ENCODE measurements at regions of chr10 and their contacts with region 1.

Region 1: DNA sequence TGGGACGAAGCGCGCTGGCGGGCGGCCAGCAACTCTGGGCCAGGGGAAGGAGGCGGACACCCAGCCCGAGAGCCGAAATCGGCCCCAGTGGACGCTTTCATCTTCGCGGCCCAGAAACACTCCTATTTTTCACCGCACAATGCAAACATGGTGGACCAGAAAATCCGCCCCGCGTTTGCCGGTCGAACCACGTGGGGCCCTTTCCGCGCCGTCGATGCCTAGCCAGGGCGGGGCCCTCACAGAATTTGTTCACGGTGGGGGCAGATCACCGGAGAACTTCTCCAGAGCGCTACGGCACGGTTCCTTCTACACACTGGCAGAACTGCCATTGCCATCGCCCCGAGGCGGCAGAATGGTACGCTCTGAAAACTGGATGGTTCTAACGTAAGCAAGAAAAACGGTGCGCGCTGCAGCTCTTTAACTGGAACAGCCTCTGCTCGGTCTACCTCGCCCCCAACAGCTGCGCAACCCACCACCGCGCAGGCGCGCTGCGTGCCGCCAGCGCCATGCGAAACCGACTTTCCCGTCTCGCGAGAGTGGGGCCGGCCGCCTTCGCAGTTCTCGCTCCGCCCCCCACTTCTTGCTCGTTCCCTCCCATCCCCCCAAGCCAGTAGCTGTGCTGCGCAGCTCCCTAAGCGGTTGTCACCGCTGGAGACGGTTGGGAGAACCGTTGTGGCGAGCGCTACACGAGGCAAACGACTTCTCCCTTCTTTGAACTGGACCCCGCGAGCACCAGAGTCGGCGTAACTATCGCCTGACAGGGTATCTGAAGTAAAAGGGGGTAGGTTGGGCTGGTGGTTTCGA is at the start of gene HNRNPH3:
- DNase-seq: peak; percentile 97 to 99 (median 99)
- ATAC-seq: peak; percentile 86
- H3K4me3 ChIP-seq: peak within 1 kb of the TSS; percentile 92
- H3K4me3 Mint-ChIP-seq: peak within 1 kb of the TSS; percentile 94 to 100 (median 100)
- H3K27ac ChIP-seq: peak within 1 kb of the TSS; percentile 99
- H3K27ac Mint-ChIP-seq: peak within 1 kb of the TSS; percentile 98 to 100 (median 100)
- H3K4me1 ChIP-seq: peaks cover 15 to 21% of the 10 kb centered on the region in 2 donors
- H3K4me1 Mint-ChIP-seq: peaks cover 40 to 65% (median 53%) of the 10 kb centered on the region in 7 donors
- H3K27me3 ChIP-seq: no peaks in the 10 kb centered on the region
- H3K27me3 Mint-ChIP-seq: peaks cover 0 to 4% (median 0%) of the 10 kb centered on the region in 5 donors
- total RNA-seq, gene HNRNPH3: 125 to 190 (median 156) TPM

Region 2: DNA sequence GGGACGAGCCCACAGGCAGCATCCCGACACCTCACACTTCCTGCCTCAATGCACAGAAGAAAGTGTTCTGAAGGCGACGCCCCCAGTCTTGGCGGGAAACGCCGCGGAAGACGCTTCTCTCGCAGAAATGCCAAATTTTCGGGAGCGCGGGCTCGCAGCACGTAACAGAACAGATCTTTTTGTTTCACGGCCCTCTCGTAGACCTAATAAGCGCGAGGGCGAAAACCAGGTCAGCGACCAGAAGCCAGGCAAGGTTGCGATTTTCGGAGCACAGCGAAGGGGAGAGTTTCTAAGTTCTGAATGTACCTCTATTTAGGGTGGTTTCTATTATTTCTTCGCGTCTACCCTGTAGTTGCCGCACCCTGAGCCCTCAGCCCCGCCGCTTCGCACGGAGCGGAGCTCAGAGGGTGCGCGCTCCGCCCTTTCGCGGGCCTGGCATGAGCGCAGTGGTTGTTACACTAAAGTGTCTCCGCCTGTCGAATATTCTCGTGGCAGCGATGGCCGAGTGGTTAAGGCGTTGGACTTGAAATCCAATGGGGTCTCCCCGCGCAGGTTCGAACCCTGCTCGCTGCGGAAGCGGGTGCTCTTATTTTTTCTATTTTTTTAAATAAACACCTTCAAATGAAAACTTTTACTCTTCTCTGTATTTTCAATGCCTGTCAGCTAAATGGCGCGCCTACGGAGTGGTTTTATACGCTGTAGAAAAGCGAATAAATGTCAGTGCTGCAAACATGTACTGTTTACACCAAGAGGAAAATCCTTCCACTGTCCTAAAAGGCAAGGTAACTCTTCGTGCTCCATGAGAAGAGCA is 567.4 kb before region 1 on chr10:
- CTCF ChIA-PET with region 1: no interaction called
- POLR2A ChIA-PET with region 1: interaction called, 15 read pairs
- intact Hi-C with region 1: loop called in 1 of 2 experiments (anchors 1 kb)
- DNase-seq: peak; percentile 96 to 99 (median 98)
- ATAC-seq: peak; percentile 88
- H3K4me3 ChIP-seq: peak overlapping the region; percentile 99
- H3K4me3 Mint-ChIP-seq: peak overlapping the region; percentile 81 to 99 (median 94)
- H3K27ac ChIP-seq: peak overlapping the region; percentile 81
- H3K27ac Mint-ChIP-seq: peak overlapping the region; percentile 95 to 100 (median 100)
- H3K4me1 ChIP-seq: peaks cover 4 to 6% of the 10 kb centered on the region in 2 donors
- H3K4me1 Mint-ChIP-seq: peaks cover 0 to 37% (median 14%) of the 10 kb centered on the region in 7 donors
- H3K27me3 ChIP-seq: no peaks in the 10 kb centered on the region
- H3K27me3 Mint-ChIP-seq: peaks cover 0 to 16% (median 0%) of the 10 kb centered on the region in 5 donors

Region 3: DNA sequence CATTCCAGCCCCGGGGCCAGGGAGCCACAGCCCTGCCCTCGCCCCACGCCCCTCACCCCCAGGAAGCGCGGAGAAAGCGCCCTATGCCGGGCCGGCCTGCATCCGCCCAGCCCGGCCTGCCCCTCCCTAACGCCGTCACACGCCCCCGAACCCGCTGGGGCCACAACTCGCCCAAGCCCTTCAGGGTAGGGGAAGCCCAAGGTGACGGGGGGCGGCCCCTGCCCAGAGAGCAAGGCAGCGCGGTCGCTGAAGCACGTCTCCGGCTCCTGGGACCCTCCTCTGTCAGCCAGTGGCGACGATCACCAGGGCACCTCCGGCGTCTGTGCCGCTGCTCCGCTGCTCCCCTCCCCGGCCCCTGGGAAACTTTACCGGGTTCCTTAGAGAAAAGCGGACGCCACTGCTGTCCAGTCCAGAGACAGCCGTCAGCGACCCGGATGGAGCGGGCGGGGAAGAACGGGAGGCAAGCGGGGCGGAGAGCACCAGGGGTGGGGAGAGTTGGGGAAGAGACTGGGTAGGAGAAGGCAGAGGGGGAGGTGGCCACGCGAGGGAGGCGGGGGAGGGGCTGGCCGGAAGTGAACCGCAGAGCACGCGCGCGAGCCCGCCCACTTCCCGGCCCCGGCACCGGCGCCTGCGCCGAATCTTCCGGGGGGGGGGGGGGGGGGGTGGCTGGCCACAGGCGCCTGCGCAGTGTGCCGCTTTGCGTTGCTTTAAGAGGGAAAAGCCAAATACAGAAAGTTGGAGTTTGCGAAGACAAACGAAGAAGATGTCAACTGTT is 256.7 kb before region 1 on chr10 and contains the start of gene HERC4:
- CTCF ChIA-PET with region 1: no interaction called
- POLR2A ChIA-PET with region 1: interaction called, 3 read pairs
- intact Hi-C with region 1: loop called (anchors 1 kb)
- DNase-seq: peak; percentile 80 to 91 (median 89)
- ATAC-seq: peak; percentile 97
- H3K4me3 ChIP-seq: peak within 1 kb of the TSS; percentile 91
- H3K4me3 Mint-ChIP-seq: peak within 1 kb of the TSS; percentile 91 to 98 (median 96)
- H3K27ac ChIP-seq: peak within 1 kb of the TSS; percentile 96
- H3K27ac Mint-ChIP-seq: peak within 1 kb of the TSS; percentile 89 to 95 (median 94)
- H3K4me1 ChIP-seq: peaks cover 15 to 21% of the 10 kb centered on the region in 2 donors
- H3K4me1 Mint-ChIP-seq: peaks cover 26 to 51% (median 41%) of the 10 kb centered on the region in 7 donors
- H3K27me3 ChIP-seq: peaks cover 0 to 3% of the 10 kb centered on the region in 2 donors
- H3K27me3 Mint-ChIP-seq: peaks cover 0 to 2% (median 0%) of the 10 kb centered on the region in 5 donors
- total RNA-seq, gene HERC4: 65.7 to 113 (median 78.6) TPM

Region 4: GRCh38 chr10:68315582-68315981 is 16.1 kb before region 1 on chr10:
- CTCF ChIA-PET with region 1: interaction called, 4 read pairs
- POLR2A ChIA-PET with region 1: interaction called, 23 read pairs
- intact Hi-C with region 1: loop called (anchors 2 kb)
- DNase-seq: no peak
- ATAC-seq: no peak
- H3K4me3 ChIP-seq: no peak overlapping the region
- H3K4me3 Mint-ChIP-seq: no peak overlapping the region
- H3K27ac ChIP-seq: no peak overlapping the region
- H3K27ac Mint-ChIP-seq: peak overlapping the region in 1 of 9 donors; percentile 17
- H3K4me1 ChIP-seq: peaks cover 4% of the 10 kb centered on the region in 2 donors
- H3K4me1 Mint-ChIP-seq: peaks cover 6 to 12% (median 8%) of the 10 kb centered on the region in 7 donors
- H3K27me3 ChIP-seq: no peaks in the 10 kb centered on the region
- H3K27me3 Mint-ChIP-seq: no peaks in the 10 kb centered on the region

Region 5: DNA sequence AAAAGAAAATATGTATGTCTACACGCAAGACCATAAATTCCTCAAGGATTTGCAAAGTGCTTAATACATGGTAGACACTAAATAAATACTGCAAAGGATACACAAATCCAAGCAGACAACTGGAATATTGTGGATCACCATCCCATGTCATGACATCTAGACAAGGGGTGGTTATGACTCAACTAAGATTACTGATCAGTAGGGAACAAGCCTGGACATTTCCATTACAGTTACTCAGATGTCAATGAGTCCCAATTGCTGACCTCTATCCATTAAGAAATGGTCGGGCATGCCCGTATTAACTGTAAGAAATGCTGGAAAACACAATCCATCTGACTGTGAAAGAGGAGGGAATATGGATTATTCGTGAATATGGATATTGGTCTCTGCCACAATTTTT is 103.0 kb after region 1 on chr10:
- CTCF ChIA-PET with region 1: no interaction called
- POLR2A ChIA-PET with region 1: no interaction called
- intact Hi-C with region 1: no loop called
- DNase-seq: no peak
- ATAC-seq: no peak
- H3K4me3 ChIP-seq: no peak overlapping the region
- H3K4me3 Mint-ChIP-seq: no peak overlapping the region
- H3K27ac ChIP-seq: no peak overlapping the region
- H3K27ac Mint-ChIP-seq: no peak overlapping the region
- H3K4me1 ChIP-seq: no peaks in the 10 kb centered on the region
- H3K4me1 Mint-ChIP-seq: peaks cover 0 to 4% (median 0%) of the 10 kb centered on the region in 7 donors
- H3K27me3 ChIP-seq: no peaks in the 10 kb centered on the region
- H3K27me3 Mint-ChIP-seq: no peaks in the 10 kb centered on the region

Region 6: GRCh38 chr10:68471586-68472408 is 140.1 kb after region 1 on chr10 and contains the start of gene DNA2:
- CTCF ChIA-PET with region 1: no interaction called
- POLR2A ChIA-PET with region 1: no interaction called
- intact Hi-C with region 1: loop called in 1 of 2 experiments (anchors 5 kb)
- DNase-seq: peak; percentile 54 to 85 (median 67)
- ATAC-seq: peak; percentile 84
- H3K4me3 ChIP-seq: peak within 1 kb of the TSS; percentile 72
- H3K4me3 Mint-ChIP-seq: peak within 1 kb of the TSS; percentile 95 to 100 (median 98)
- H3K27ac ChIP-seq: peak within 1 kb of the TSS; percentile 69
- H3K27ac Mint-ChIP-seq: peak within 1 kb of the TSS; percentile 54 to 99 (median 86)
- H3K4me1 ChIP-seq: peaks cover 0 to 5% of the 10 kb centered on the region in 2 donors
- H3K4me1 Mint-ChIP-seq: peaks cover 6 to 26% (median 14%) of the 10 kb centered on the region in 7 donors
- H3K27me3 ChIP-seq: no peaks in the 10 kb centered on the region
- H3K27me3 Mint-ChIP-seq: no peaks in the 10 kb centered on the region
- total RNA-seq, gene DNA2: 3.8 to 40.2 (median 6.3) TPM

Region 7: DNA sequence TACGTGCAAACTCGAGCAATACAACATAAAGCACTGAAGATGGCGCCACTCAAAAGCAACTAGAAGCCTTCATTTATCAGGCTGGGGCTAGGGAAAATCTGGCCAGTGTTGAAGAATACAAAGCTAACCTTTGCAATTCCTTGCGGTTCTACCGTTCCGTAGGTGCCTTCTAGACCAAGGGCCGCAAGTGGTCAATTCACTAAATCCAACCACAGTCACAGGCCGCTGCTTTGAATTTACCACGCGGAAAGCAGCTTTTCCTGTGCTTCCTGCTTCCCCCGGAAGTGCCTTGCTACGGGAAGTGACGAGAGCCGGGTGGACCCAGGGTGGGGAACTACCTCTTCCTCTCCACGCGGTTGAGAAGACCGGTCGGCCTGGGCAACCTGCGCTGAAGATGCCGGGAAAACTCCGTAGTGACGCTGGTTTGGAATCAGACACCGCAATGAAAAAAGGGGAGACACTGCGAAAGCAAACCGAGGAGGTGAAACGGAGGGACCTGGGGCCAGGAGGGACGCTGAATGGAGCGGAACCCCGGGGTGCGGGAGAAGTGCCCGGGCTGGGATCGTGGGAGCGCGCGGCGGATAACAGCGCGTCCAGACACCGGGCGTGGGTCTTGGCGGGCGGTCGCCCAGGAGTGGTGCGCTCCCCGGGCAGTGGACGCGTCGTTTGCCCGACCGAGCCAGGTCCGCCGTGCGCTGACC is 624.3 kb after region 1 on chr10 and contains the start of gene DDX21:
- CTCF ChIA-PET with region 1: no interaction called
- POLR2A ChIA-PET with region 1: no interaction called
- intact Hi-C with region 1: loop called in 1 of 2 experiments (anchors 2 kb)
- DNase-seq: peak; percentile 70 to 94 (median 89)
- ATAC-seq: peak; percentile 89
- H3K4me3 ChIP-seq: peak within 1 kb of the TSS; percentile 71
- H3K4me3 Mint-ChIP-seq: peak within 1 kb of the TSS; percentile 91 to 100 (median 98)
- H3K27ac ChIP-seq: peak within 1 kb of the TSS; percentile 97
- H3K27ac Mint-ChIP-seq: peak within 1 kb of the TSS; percentile 96 to 100 (median 99)
- H3K4me1 ChIP-seq: peaks cover 7 to 11% of the 10 kb centered on the region in 2 donors
- H3K4me1 Mint-ChIP-seq: peaks cover 15 to 53% (median 33%) of the 10 kb centered on the region in 7 donors
- H3K27me3 ChIP-seq: no peaks in the 10 kb centered on the region
- H3K27me3 Mint-ChIP-seq: no peaks in the 10 kb centered on the region
- total RNA-seq, gene DDX21: 43.5 to 101 (median 86.7) TPM

Measured in naive thymus-derived CD4-positive, alpha-beta T cell (primary cell).